ENCODE measurements at regions of chr20 and their contacts with region 1.

Region 1: DNA sequence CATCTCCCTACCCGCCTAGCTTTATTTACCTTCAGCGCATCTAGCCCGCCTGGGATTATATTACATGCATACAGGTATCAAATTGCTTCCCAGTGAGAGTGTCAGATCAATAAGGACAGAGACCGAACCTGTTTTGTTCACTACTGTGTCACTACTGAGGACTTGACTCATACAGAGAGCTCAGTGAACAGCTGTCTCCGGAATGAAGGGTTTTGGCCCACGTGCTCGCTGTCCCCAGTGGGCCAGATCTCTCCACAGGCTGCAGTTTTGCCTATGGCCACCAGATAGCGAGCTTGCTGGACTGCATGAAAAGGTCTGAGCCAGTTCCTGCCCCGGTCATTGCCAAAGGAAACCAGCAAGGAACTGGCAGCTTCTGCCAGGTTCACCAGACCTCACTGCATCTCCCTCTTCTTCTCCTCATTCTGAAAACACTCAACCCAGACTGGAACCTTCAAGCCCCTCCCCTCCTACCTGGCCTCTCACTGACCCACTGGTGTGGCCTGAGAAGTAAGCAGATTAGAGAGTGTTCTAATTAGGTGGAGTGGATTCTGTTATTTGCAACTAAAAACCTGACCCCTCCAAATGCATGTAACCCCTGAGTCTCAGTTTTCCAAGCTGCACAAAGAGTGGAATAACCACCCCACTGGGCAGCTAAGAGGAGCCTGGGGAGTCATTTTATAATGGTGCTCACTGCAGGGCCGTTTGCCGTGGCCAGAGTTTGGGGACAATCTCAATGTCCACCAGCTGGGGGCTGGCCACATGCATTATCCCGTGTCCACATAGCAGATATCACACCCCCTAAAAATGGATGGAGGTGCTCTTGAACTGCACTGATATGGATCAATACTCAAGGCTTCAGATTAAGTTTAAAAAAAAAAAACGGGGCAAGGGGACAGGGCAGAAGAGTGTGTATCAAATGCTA is 150.7 kb downstream of the ZMYND8 start:
- DNase-seq: peak; percentile 78
- ATAC-seq: peak; percentile 74
- H3K4me3 Mint-ChIP-seq: no peak overlapping the region
- H3K27ac Mint-ChIP-seq: peak overlapping the region; percentile 6
- H3K4me1 Mint-ChIP-seq: peaks cover 21% of the 10 kb centered on the region
- H3K27me3 Mint-ChIP-seq: no peaks in the 10 kb centered on the region
- CTCF ChIP-seq: peak; percentile 83

Region 2: GRCh38 chr20:46883892-46884291 is 321.9 kb before region 1 on chr20:
- CTCF ChIA-PET with region 1: no interaction called
- POLR2A ChIA-PET with region 1: no interaction called
- DNase-seq: no peak
- ATAC-seq: no peak
- H3K4me3 Mint-ChIP-seq: no peak overlapping the region
- H3K27ac Mint-ChIP-seq: no peak overlapping the region
- H3K4me1 Mint-ChIP-seq: peaks cover 16% of the 10 kb centered on the region
- H3K27me3 Mint-ChIP-seq: no peaks in the 10 kb centered on the region; the same call in 1 of the 2 replicates
- CTCF ChIP-seq: no peak

Region 3: GRCh38 chr20:47220161-47220582 is 14.3 kb after region 1 on chr20:
- CTCF ChIA-PET with region 1: interaction called, 11 read pairs
- POLR2A ChIA-PET with region 1: no interaction called
- DNase-seq: peak; percentile 67
- ATAC-seq: peak; percentile 73
- H3K4me3 Mint-ChIP-seq: no peak overlapping the region
- H3K27ac Mint-ChIP-seq: no peak overlapping the region
- H3K4me1 Mint-ChIP-seq: peaks cover 3% of the 10 kb centered on the region; the same call in 1 of the 2 replicates
- H3K27me3 Mint-ChIP-seq: no peaks in the 10 kb centered on the region
- CTCF ChIP-seq: peak; percentile 65; the same call in 1 of the 2 replicates

Region 4: GRCh38 chr20:47231382-47232039 is 25.7 kb after region 1 on chr20:
- CTCF ChIA-PET with region 1: interaction called, 15 read pairs
- POLR2A ChIA-PET with region 1: no interaction called
- DNase-seq: no peak
- ATAC-seq: no peak
- H3K4me3 Mint-ChIP-seq: no peak overlapping the region
- H3K27ac Mint-ChIP-seq: peak overlapping the region; percentile 51
- H3K4me1 Mint-ChIP-seq: peaks cover 22% of the 10 kb centered on the region
- H3K27me3 Mint-ChIP-seq: no peaks in the 10 kb centered on the region
- CTCF ChIP-seq: no peak

Measured in WTC11 (cell line).